Activated B cell treated with CpG ODN at 0.5 μM for 24 hours (primary cell): ENCODE measurements at regions of chr5 and their contacts with region 1.

Region 1: GRCh38 chr5:139633295-139634027 is 14.7 kb upstream of the CXXC5 start:
- DNase-seq: peak; percentile 63
- ATAC-seq: peak; percentile 15
- H3K4me3 Mint-ChIP-seq: no peak overlapping the region
- H3K27ac Mint-ChIP-seq: peak overlapping the region; percentile 97
- H3K4me1 Mint-ChIP-seq: peaks cover 53% of the 10 kb centered on the region
- H3K27me3 Mint-ChIP-seq: no peaks in the 10 kb centered on the region
- CTCF ChIP-seq: peak; percentile 56

Region 2: DNA sequence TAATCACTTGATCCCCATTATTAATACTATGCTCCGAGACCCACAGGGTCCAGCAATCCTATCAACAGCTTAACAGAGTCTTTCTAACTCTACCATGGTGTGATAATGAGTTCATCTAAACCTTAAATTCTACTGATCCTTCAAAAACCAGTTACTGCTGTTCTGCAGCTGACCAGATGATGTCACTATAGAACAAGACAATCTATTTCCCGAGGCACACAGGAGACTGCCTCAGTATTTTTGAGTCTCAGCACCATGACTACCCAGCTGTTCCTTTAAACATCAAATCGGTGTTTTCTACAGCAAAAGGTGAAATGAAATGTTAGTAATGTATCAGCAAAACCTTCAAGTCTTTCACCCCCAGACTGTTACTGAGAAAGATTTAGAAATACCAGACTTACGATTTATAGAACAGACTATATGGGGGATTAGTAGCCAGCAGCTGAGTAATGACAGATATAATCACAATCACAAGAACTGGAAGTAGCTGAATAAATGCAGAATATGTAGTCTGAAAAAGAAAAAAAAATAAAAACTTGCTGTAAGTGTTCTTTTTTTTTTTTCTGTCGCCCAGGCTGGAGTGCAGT is 211.1 kb before region 1 on chr5:
- CTCF ChIA-PET with region 1: interaction called, 19 read pairs
- POLR2A ChIA-PET with region 1: no interaction called
- intact Hi-C with region 1: loop called (anchors 1 kb)
- DNase-seq: no peak
- ATAC-seq: peak; percentile 99
- H3K4me3 Mint-ChIP-seq: no peak overlapping the region
- H3K27ac Mint-ChIP-seq: no peak overlapping the region
- H3K4me1 Mint-ChIP-seq: peaks cover 5% of the 10 kb centered on the region
- H3K27me3 Mint-ChIP-seq: no peaks in the 10 kb centered on the region
- CTCF ChIP-seq: no peak

Region 3: DNA sequence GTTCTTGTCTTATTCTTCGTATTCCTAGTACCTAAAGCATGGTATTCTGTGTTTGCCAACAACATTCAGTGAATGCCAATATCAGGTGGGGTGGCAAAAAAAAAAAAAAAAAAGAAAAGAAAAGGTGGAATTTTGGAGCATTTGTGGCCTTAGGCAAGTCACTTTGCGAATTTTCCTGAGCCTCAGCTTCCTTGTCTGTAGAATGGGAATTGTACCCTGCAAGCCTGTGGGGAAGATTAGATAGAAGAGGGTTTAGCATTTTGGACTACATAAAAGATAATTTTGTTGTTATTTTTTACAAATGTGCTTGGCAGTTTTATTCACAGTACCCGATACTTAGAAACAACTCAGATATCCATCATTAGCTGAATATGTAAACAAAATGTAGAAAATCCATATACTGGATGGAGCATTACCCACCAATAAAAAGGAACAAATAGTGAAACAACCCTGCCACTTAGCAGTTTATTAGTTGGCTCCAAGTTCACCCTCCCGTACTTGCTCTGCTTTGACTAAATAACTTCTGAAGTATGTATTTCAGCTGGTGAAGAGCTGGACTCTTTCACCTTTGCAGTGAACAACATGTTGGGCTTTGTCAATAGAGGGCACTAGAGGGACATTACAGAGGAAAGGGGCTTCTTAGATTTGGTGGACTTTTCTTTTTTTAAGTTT is 58.7 kb before region 1 on chr5:
- CTCF ChIA-PET with region 1: interaction called, 17 read pairs
- POLR2A ChIA-PET with region 1: no interaction called
- intact Hi-C with region 1: no loop called
- DNase-seq: no peak
- ATAC-seq: peak; percentile 70
- H3K4me3 Mint-ChIP-seq: no peak overlapping the region
- H3K27ac Mint-ChIP-seq: peak overlapping the region; percentile 42
- H3K4me1 Mint-ChIP-seq: peaks cover 81% of the 10 kb centered on the region
- H3K27me3 Mint-ChIP-seq: no peaks in the 10 kb centered on the region
- CTCF ChIP-seq: peak; percentile 28

Region 4: DNA sequence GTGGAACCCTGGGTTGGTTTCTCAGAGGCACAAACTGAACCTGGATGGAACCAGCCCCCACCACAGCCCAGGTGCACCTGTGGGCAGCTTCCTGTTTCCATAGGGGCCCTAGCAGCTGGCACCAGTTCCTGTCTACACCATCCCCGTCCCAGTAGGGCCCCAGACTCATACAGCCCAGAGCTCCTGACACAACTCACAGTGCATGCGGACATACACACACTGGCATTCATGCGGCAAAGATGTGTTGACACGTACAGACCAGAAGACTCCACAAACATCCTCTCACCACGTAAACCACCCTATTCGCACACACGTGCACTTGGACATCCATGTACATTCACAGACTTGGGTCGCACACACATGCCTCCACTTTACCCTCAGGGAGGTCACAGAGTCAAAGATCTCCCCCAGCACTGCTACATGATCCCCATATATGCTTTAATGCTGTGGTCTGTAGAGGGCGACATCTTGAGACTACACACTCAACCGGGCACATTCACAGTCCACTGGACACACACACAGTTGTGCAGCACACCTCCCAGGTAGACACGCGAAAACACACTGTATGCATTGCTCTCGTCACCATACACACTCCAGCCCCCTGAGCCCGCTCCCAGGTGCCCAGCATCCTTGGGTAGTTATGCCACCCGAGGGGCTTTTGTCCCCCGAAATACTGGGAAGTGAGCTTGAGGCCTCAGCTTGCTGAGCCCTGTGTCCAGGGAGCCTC is 37.1 kb after region 1 on chr5:
- CTCF ChIA-PET with region 1: interaction called, 101 read pairs
- POLR2A ChIA-PET with region 1: interaction called, 417 read pairs
- intact Hi-C with region 1: loop called (anchors 1 kb)
- DNase-seq: peak; percentile 65
- ATAC-seq: peak; percentile 61
- H3K4me3 Mint-ChIP-seq: peak overlapping the region; percentile 86
- H3K27ac Mint-ChIP-seq: peak overlapping the region; percentile 92
- H3K4me1 Mint-ChIP-seq: peaks cover 92% of the 10 kb centered on the region
- H3K27me3 Mint-ChIP-seq: no peaks in the 10 kb centered on the region
- CTCF ChIP-seq: no peak

Region 5: GRCh38 chr5:139696894-139697658 is 63.6 kb after region 1 on chr5:
- CTCF ChIA-PET with region 1: interaction called, 325 read pairs
- POLR2A ChIA-PET with region 1: interaction called, 179 read pairs
- intact Hi-C with region 1: no loop called
- DNase-seq: no peak
- ATAC-seq: peak; percentile 45
- H3K4me3 Mint-ChIP-seq: peak overlapping the region; percentile 78
- H3K27ac Mint-ChIP-seq: peak overlapping the region; percentile 61
- H3K4me1 Mint-ChIP-seq: peaks cover 53% of the 10 kb centered on the region
- H3K27me3 Mint-ChIP-seq: peaks cover 15% of the 10 kb centered on the region
- CTCF ChIP-seq: no peak

Region 6: DNA sequence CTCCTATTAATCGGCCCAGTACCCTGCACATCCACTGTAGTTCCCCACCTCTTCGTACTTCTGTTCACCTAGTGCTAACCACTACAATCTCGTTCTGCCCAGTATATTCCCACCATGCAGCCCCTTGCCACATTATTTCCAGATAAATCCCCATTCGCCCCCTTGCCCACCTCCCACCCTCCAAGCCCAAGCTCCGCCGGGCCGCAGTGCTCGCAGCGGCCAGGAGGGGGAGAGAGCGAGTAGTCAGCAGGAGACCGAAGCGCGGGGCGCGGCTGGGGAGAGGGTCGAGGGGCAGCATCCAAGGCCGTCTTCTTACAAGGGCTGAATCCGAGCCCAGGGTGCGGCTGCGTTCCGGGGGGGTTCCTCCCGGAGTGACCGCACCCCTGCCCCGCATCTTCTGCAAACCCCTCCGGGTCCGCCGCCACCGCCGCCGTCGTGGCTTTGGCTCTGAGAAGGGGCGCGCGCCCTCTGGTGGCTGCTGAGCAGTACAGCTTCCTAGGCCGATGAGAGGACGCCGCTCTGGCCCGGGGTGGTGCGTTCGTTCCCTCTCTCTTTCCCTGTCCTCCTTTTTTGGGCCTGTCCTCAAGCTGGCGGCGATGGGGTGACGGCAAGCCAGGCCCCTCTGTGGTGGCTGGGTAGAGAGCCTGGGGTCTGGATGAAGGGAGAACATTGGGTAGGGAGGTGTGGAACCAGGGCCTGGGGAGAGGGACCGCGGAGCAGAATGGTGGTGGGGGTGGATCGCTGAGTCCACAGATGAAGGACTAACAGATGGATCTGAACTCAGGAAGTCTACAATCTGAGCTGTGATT is 132.2 kb after region 1 on chr5:
- CTCF ChIA-PET with region 1: interaction called, 228 read pairs
- POLR2A ChIA-PET with region 1: interaction called, 71 read pairs
- intact Hi-C with region 1: loop called (anchors 1 kb)
- DNase-seq: peak; percentile 87
- ATAC-seq: peak; percentile 86
- H3K4me3 Mint-ChIP-seq: peak overlapping the region; percentile 74
- H3K27ac Mint-ChIP-seq: peak overlapping the region; percentile 56
- H3K4me1 Mint-ChIP-seq: peaks cover 25% of the 10 kb centered on the region
- H3K27me3 Mint-ChIP-seq: peaks cover 9% of the 10 kb centered on the region
- CTCF ChIP-seq: peak; percentile 98

Region 7: DNA sequence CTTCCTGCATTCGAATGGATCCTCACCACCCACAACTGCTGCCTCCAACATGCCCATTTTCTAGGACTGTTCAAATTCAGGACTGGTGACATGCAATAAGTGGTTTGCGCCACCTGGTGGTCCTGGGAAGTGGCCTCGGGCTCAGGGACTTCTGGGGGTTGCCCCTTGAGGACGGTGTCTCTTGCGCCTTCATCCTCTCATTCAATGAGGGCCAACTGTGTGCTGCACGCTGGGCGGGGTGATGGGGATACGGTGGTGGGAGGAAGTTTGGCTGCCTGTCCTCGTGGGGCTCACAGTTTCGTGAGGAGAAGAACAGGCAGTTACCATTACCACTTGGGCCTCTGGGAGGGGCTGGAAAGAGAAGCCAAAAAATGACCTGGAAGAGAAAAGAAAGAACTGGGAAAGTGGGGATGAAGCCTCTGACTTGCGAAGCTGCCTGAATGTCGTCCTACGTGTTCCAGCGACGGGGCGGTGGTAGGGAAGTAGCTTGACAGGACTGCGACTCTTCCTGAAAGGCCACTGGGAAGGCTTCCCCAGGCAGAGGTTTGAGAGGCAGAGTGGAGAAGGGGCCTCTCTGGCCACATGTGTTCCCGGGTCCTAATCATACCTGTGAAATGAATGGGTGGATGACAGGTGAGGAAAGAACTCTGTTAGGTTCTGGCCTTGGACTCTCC is 211.1 kb after region 1 on chr5:
- CTCF ChIA-PET with region 1: interaction called, 3 read pairs
- POLR2A ChIA-PET with region 1: no interaction called
- intact Hi-C with region 1: loop called (anchors 2 kb)
- DNase-seq: peak; percentile 57
- ATAC-seq: peak; percentile 40
- H3K4me3 Mint-ChIP-seq: peak overlapping the region; percentile 5
- H3K27ac Mint-ChIP-seq: no peak overlapping the region
- H3K4me1 Mint-ChIP-seq: peaks cover 16% of the 10 kb centered on the region
- H3K27me3 Mint-ChIP-seq: peaks cover 13% of the 10 kb centered on the region
- CTCF ChIP-seq: peak; percentile 61

Region 8: GRCh38 chr5:140093179-140093578 is 459.7 kb after region 1 on chr5:
- CTCF ChIA-PET with region 1: no interaction called
- POLR2A ChIA-PET with region 1: no interaction called
- intact Hi-C with region 1: no loop called
- DNase-seq: no peak
- ATAC-seq: no peak
- H3K4me3 Mint-ChIP-seq: no peak overlapping the region
- H3K27ac Mint-ChIP-seq: no peak overlapping the region
- H3K4me1 Mint-ChIP-seq: no peaks in the 10 kb centered on the region
- H3K27me3 Mint-ChIP-seq: peaks cover 20% of the 10 kb centered on the region
- CTCF ChIP-seq: no peak